ENCODE measurements at regions of chr7 and their contacts with region 1.

Region 1: DNA sequence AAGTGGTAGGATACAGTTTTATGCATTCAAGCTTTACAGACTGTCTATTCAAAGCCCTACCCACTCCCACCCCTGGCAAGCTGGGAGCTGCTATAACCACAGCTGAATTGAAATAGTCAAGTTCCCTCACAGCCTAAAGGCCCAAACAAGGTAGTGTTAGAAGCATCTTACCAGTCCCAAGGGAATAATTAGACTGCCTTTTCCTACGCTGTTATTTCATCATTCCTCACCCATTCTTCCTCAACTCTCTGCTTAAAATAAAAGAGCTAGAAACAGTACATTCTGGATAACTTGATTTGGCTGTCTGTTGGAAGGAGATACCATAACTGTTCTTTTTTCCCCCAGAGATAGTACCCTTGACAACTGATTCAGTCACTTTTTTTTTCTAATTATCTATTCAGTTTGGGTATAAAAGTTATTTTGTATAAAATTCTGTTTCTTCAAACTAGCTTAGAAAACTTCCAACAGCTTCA is 54.0 kb downstream of the RAPGEF5 start:
- DNase-seq: no peak
- H3K4me3 ChIP-seq: no peak overlapping the region
- H3K27ac ChIP-seq: no peak overlapping the region
- H3K4me1 ChIP-seq: peaks cover 0 to 6% (median 5%) of the 10 kb centered on the region in 4 donors
- H3K27me3 ChIP-seq: no peaks in the 10 kb centered on the region
- CTCF ChIP-seq: no peak
- EP300 ChIP-seq: no peak
- POLR2A ChIP-seq: no peak

Region 2: GRCh38 chr7:22361795-22362194 is 58.8 kb after region 1 on chr7:
- intact Hi-C with region 1: loop called (anchors 10 kb)
- DNase-seq: peak; percentile 37 to 57
- H3K4me3 ChIP-seq: no peak overlapping the region
- H3K27ac ChIP-seq: no peak overlapping the region
- H3K4me1 ChIP-seq: peaks cover 4 to 16% (median 8%) of the 10 kb centered on the region in 4 donors
- H3K27me3 ChIP-seq: peaks cover 0 to 8% (median 0%) of the 10 kb centered on the region in 3 donors
- CTCF ChIP-seq: no peak
- EP300 ChIP-seq: no peak
- POLR2A ChIP-seq: no peak